ENCODE measurements at regions of chr14 and their contacts with region 1.

Region 1: DNA sequence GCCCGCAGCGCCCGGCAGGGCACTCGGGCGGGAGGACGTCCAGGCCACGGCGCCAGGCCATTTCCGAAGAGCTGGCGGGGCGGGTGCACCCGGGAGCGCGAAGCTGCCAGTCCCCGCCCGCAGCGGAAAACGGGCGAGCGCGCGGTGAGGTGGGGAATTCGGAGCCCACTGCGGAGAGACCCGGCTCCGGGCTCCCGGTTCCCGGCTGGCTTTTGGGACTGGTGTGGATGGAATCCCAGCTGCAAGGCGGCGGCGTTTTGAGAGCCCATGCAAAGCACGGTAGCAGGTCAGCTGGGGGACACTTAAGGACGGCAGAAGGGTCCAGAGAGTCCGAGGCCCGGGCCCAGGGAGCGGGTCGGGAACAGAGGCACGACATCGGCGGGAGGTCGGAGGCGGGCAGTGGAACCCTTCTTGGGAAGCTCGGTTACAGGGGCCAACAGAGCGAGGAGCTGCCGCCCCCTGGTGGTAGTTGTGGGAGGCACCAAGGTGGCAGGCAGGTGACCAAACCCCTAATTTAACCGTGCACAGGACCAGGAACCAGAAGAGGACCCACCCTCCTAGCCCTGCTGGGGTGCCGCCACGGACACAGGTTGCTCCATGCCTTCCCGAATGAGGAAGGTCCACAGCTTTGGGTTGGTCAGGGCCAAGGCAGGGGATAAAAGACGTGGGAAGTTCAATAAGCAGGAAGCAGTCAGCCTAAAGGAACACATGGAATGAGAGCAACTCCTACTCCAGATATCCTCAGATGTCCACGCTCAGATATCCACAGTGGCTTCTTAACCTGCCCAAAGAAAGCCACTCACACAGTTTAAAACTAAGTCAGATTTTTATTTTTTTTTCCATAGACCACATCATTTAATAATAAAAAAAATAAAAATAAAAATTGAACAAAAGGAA is 685 bp upstream of the CDH24 start:
- DNase-seq: no peak
- H3K4me3 ChIP-seq: peak overlapping the region; percentile 52
- H3K27me3 ChIP-seq: no peaks in the 10 kb centered on the region
- CTCF ChIP-seq: peak; percentile 92

Region 2: GRCh38 chr14:22929104-22929847 is 128.7 kb before region 1 on chr14 and contains the start of gene PRMT5:
- CTCF ChIA-PET with region 1: interaction called, 16 read pairs
- POLR2A ChIA-PET with region 1: no interaction called
- DNase-seq: peak; percentile 100
- H3K4me3 ChIP-seq: peak within 1 kb of the TSS; percentile 86
- H3K27me3 ChIP-seq: no peaks in the 10 kb centered on the region
- CTCF ChIP-seq: no peak
- polyA plus RNA-seq, gene PRMT5: 128 and 152 TPM in 2 replicates

Region 3: GRCh38 chr14:23006544-23007419 is 51.2 kb before region 1 on chr14:
- CTCF ChIA-PET with region 1: interaction called, 32 read pairs
- POLR2A ChIA-PET with region 1: interaction called, 4 read pairs
- DNase-seq: peak; percentile 87
- H3K4me3 ChIP-seq: peak overlapping the region; percentile 75
- H3K27me3 ChIP-seq: no peaks in the 10 kb centered on the region
- CTCF ChIP-seq: peak; percentile 51

Region 4: DNA sequence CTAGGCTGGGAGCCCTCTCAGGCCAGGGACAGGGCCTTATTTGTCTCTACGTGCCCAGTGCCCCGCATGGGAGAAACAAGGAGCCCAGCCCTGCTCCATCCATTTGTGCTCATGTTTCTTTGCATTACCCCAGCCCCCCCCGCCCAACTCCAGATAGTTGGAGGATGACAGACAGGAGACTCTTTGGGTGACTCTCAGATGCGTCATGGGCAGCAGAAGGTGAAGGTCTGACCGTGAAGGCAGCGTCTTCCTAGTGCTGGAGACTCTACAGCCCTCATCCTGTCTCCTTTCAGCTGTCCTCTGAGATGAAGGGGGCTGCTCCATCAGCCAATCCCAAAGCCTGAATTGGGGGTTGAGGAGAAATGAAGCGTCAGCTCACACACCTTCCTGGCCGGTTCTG is 16.3 kb before region 1 on chr14:
- CTCF ChIA-PET with region 1: interaction called, 13 read pairs
- POLR2A ChIA-PET with region 1: no interaction called
- DNase-seq: no peak
- H3K4me3 ChIP-seq: no peak overlapping the region
- H3K27me3 ChIP-seq: no peaks in the 10 kb centered on the region
- CTCF ChIP-seq: no peak

Region 5: DNA sequence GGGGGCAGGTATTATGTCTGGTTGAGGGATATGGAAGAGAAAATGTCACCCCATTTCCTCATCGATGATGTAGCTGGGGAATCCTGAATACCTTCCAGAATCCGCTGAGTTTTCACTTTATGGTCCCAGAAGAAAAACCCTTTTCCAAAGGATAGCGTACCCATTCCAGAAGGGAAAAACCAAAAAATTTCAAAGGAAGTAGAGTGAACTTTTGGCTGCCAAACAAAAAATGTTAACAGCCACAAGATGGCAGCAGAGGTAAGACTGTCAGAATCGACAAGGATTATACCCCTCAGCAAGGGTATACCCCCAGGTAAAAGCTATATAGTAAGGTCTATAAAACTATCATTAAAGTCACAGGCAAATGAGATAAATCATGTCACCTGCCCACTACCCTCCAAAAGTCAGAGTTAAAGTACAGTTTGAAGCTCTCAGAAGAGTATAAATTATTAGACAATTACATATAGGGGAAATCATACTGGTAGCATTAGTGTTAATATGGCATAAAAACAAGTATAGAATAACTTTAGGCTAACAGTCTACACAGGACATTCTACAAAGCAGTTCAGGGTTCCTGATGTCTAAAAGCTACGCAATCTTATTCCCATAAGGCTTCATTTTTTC is 18.9 kb after region 1 on chr14:
- CTCF ChIA-PET with region 1: interaction called, 31 read pairs
- POLR2A ChIA-PET with region 1: interaction called, 14 read pairs
- DNase-seq: no peak
- H3K4me3 ChIP-seq: no peak overlapping the region
- H3K27me3 ChIP-seq: no peaks in the 10 kb centered on the region
- CTCF ChIP-seq: peak; percentile 70

Region 6: GRCh38 chr14:23114669-23115491 is 56.9 kb after region 1 on chr14:
- CTCF ChIA-PET with region 1: interaction called, 79 read pairs
- POLR2A ChIA-PET with region 1: no interaction called
- DNase-seq: peak; percentile 92
- H3K4me3 ChIP-seq: no peak overlapping the region
- H3K27me3 ChIP-seq: peaks cover under 1% of the 10 kb centered on the region; the same call in 1 of the 2 replicates
- CTCF ChIP-seq: no peak

Region 7: DNA sequence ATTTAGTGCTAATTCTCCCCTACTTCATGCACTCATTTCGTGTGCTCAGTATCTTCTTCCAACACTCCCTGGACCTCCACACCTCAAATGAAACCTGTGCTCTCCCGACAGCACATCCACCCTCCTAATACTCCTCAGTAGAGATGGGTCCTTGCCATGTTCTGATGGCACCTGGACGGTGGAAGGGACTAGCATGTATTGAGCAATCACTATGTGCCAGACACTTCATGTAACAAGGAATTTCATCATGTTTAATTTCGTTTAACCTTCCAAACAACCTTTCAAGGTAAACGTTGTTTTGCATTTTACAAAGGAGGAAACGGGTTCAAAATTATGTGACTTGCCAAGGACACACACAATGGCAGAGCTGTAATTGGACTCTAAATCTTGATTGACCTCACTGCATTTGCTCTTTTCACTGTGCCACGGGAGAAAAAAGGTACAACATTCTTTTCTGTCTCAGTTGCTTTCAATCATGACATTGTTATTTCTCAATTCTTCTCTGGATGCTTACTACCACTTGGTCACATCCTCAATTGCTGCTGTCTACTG is 137.6 kb after region 1 on chr14:
- CTCF ChIA-PET with region 1: no interaction called
- POLR2A ChIA-PET with region 1: no interaction called
- DNase-seq: no peak
- H3K4me3 ChIP-seq: no peak overlapping the region
- H3K27me3 ChIP-seq: no peaks in the 10 kb centered on the region
- CTCF ChIP-seq: no peak